ENCODE measurements at regions of chr6 and their contacts with region 1.

Region 1: DNA sequence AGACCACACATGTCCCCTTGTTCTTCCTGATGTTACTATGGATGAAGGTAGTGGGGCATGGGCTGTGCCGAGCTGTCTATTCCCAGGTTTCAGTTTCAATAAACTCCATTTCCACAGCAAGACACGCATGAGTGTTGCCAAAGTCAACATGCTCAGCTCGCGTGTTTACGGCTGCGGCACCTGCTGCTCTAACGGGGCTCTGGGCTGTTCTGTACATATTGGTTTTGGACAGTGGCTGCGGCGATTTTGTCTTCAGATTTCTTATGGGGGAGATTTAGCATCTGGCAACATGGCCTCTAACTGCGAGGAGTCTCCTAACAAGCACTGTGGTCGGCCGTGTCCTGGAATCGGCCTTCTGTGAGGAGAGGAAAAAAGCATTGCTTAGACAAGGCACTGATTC is 58.6 kb downstream of the TMEM242 start:
- DNase-seq: no peak
- ATAC-seq: peak; percentile 50

Region 2: DNA sequence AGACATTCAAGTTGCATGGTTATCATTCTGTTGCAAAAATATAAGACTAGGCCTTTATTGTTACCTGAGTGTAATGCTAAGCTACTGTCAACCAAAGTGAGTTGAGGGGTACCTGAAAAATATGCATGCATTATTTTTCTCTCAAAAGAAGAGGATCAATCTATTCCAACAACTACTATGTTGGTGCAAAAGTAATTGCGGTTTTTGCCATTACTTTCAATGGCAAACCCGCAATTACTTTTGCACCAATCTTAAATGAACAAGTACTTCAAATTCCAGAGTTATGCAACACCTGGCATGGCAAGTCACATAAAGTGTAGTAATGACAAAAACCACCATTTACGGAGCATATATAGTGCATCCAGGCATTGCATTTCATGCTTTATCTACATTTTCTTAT is 1502.1 kb before region 1 on chr6:
- intact Hi-C with region 1: loop called (anchors 5 kb)
- DNase-seq: no peak
- ATAC-seq: no peak

Region 3: DNA sequence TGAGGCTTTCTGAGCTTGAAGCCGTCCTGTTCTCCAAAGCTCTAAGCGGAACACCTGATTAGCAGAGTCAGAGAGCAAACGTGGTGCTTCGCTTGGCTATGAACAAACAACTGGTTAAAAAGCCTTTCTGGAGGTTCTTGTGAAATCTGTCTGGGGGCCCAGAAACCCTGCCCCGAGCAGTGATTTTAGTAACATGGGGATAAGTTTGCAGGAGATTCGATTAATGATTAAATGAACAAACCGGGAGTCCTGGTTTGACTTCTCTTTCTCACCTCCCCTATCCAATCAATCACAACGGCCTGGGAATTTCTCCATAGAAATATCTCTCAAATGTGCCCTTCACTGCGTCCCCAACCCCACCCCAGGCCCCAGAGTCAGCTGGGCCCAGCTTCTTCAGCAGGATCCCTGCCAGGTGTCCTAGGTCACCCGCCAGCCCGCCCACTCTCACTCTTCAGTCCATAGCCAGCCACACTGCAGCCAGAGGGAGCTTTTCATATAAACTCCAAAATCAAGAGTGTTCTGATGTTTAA is 159.9 kb after region 1 on chr6:
- intact Hi-C with region 1: no loop called
- DNase-seq: no peak
- ATAC-seq: no peak